Body of pancreas (tissue), 4 donors: ENCODE measurements at regions of chr3 and their contacts with region 1.

Region 1: GRCh38 chr3:55476515-55476914 is 10.6 kb downstream of the WNT5A start:
- DNase-seq: no peak
- ATAC-seq: no peak
- H3K4me3 ChIP-seq: no peak overlapping the region
- H3K27ac ChIP-seq: no peak overlapping the region
- H3K4me1 ChIP-seq: peaks cover 12% of the 10 kb centered on the region
- H3K27me3 ChIP-seq: no peaks in the 10 kb centered on the region
- CTCF ChIP-seq: no peak
- POLR2A ChIP-seq: no peak

Region 2: DNA sequence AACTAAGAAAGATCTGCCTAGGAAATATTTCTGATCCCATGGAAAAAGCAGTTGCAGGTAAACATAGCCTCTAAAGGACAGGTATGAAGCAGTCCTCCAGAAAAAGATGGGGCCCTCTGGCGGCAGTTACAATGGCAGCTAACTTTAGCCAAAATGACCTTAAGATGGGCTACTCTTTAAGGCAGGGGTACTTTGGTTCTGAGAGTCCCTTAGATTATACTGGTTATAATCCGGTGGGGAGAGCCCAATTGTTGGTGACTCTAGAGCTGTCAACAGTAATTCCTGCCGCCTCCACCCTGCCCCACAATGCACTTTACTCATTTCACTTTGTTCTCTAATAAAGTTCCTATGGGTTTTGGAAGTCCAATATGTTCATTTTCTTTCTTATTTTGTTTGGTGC is 423.4 kb after region 1 on chr3:
- intact Hi-C with region 1: loop called (anchors 10 kb)
- DNase-seq: peak; percentile 23 to 66 (median 40)
- ATAC-seq: no peak
- H3K4me3 ChIP-seq: no peak overlapping the region
- H3K27ac ChIP-seq: no peak overlapping the region
- H3K4me1 ChIP-seq: no peaks in the 10 kb centered on the region
- H3K27me3 ChIP-seq: no peaks in the 10 kb centered on the region
- CTCF ChIP-seq: peak; percentile 23 to 57 (median 37)
- POLR2A ChIP-seq: no peak